ENCODE measurements at regions of chr10 and their contacts with region 1.

Region 1: GRCh38 chr10:73096449-73097304 is at the start of gene P4HA1:
- DNase-seq: peak; percentile 90 to 98 (median 94)
- ATAC-seq: peak; percentile 81 to 92 (median 90)
- H3K4me3 ChIP-seq: peak within 1 kb of the TSS; percentile 86 to 96
- H3K4me3 Mint-ChIP-seq: peak within 1 kb of the TSS; percentile 90 to 95 (median 95)
- H3K27ac ChIP-seq: peak within 1 kb of the TSS; percentile 97
- H3K27ac Mint-ChIP-seq: peak within 1 kb of the TSS; percentile 88 to 93
- H3K4me1 ChIP-seq: peaks cover 2 to 24% of the 10 kb centered on the region in 2 experiments
- H3K4me1 Mint-ChIP-seq: peaks cover 27 to 40% (median 31%) of the 10 kb centered on the region in 3 donors
- H3K27me3 ChIP-seq: no peaks in the 10 kb centered on the region
- H3K27me3 Mint-ChIP-seq: no peaks in the 10 kb centered on the region
- total RNA-seq, gene P4HA1: 11.3 to 15.4 (median 13.0) TPM

Region 2: GRCh38 chr10:71582019-71582418 is 1514.7 kb before region 1 on chr10:
- CTCF ChIA-PET with region 1: no interaction called
- POLR2A ChIA-PET with region 1: interaction called in 1 of 2 experiments, 16 read pairs
- DNase-seq: no peak
- ATAC-seq: no peak
- H3K4me3 ChIP-seq: no peak overlapping the region
- H3K4me3 Mint-ChIP-seq: no peak overlapping the region
- H3K27ac ChIP-seq: no peak overlapping the region
- H3K27ac Mint-ChIP-seq: no peak overlapping the region
- H3K4me1 ChIP-seq: no peaks in the 10 kb centered on the region
- H3K4me1 Mint-ChIP-seq: no peaks in the 10 kb centered on the region
- H3K27me3 ChIP-seq: peaks cover 0 to 28% of the 10 kb centered on the region in 2 experiments
- H3K27me3 Mint-ChIP-seq: peaks cover 0 to 4% of the 10 kb centered on the region in 2 donors

Region 3: GRCh38 chr10:72904806-72905205 is 191.9 kb before region 1 on chr10:
- CTCF ChIA-PET with region 1: no interaction called
- POLR2A ChIA-PET with region 1: no interaction called
- DNase-seq: no peak
- ATAC-seq: no peak
- H3K4me3 ChIP-seq: no peak overlapping the region
- H3K4me3 Mint-ChIP-seq: no peak overlapping the region
- H3K27ac ChIP-seq: no peak overlapping the region
- H3K27ac Mint-ChIP-seq: no peak overlapping the region
- H3K4me1 ChIP-seq: no peaks in the 10 kb centered on the region
- H3K4me1 Mint-ChIP-seq: no peaks in the 10 kb centered on the region
- H3K27me3 ChIP-seq: peaks cover 0 to 9% of the 10 kb centered on the region in 2 experiments
- H3K27me3 Mint-ChIP-seq: peaks cover 0 to 2% of the 10 kb centered on the region in 2 donors

Region 4: DNA sequence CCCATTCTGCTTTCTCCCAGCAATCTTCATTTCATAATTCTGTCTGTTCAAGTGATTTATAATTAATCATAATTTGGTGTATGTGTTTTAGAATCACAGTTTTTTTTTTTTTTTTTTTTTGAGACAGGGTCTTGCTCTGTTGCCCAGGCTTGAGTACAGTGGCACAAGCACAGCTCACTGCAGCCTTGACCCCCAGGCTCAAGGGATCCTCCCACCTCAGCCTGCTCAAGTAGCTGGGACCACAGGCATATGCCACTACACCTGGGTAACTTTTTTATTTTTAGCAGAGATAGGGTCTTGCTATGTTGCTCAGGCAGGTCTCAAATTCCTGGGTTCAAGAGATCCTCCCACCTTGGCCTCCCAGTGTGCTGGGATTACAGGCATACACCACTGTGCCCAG is 92.9 kb before region 1 on chr10:
- CTCF ChIA-PET with region 1: no interaction called
- POLR2A ChIA-PET with region 1: interaction called in 1 of 2 experiments, 11 read pairs
- DNase-seq: no peak
- ATAC-seq: no peak
- H3K4me3 ChIP-seq: no peak overlapping the region
- H3K4me3 Mint-ChIP-seq: no peak overlapping the region
- H3K27ac ChIP-seq: no peak overlapping the region
- H3K27ac Mint-ChIP-seq: no peak overlapping the region
- H3K4me1 ChIP-seq: no peaks in the 10 kb centered on the region
- H3K4me1 Mint-ChIP-seq: no peaks in the 10 kb centered on the region
- H3K27me3 ChIP-seq: no peaks in the 10 kb centered on the region
- H3K27me3 Mint-ChIP-seq: no peaks in the 10 kb centered on the region

Region 5: GRCh38 chr10:73054286-73054685 is 42.4 kb before region 1 on chr10:
- CTCF ChIA-PET with region 1: no interaction called
- POLR2A ChIA-PET with region 1: no interaction called
- DNase-seq: no peak
- ATAC-seq: no peak
- H3K4me3 ChIP-seq: no peak overlapping the region
- H3K4me3 Mint-ChIP-seq: no peak overlapping the region
- H3K27ac ChIP-seq: no peak overlapping the region
- H3K27ac Mint-ChIP-seq: no peak overlapping the region
- H3K4me1 ChIP-seq: no peaks in the 10 kb centered on the region
- H3K4me1 Mint-ChIP-seq: no peaks in the 10 kb centered on the region
- H3K27me3 ChIP-seq: no peaks in the 10 kb centered on the region
- H3K27me3 Mint-ChIP-seq: no peaks in the 10 kb centered on the region

Region 6: GRCh38 chr10:73110345-73110849 is 13.7 kb after region 1 on chr10 and contains the start of gene NUDT13:
- CTCF ChIA-PET with region 1: interaction called, 12 to 23 read pairs
- POLR2A ChIA-PET with region 1: interaction called in 1 of 2 experiments, 14 read pairs
- DNase-seq: peak in 33 of 35 experiments; percentile 8 to 75 (median 29)
- ATAC-seq: peak; percentile 86 to 95 (median 92)
- H3K4me3 ChIP-seq: peak within 1 kb of the TSS; percentile 51 to 64
- H3K4me3 Mint-ChIP-seq: peak within 1 kb of the TSS; percentile 88 to 90 (median 89)
- H3K27ac ChIP-seq: peak within 1 kb of the TSS; percentile 30
- H3K27ac Mint-ChIP-seq: peak within 1 kb of the TSS; percentile 90 to 95
- H3K4me1 ChIP-seq: peaks cover 4% of the 10 kb centered on the region in 2 experiments
- H3K4me1 Mint-ChIP-seq: peaks cover 10 to 16% (median 13%) of the 10 kb centered on the region in 3 donors
- H3K27me3 ChIP-seq: no peaks in the 10 kb centered on the region
- H3K27me3 Mint-ChIP-seq: no peaks in the 10 kb centered on the region
- total RNA-seq, gene NUDT13: 0.49 to 3.3 (median 2.2) TPM

Region 7: DNA sequence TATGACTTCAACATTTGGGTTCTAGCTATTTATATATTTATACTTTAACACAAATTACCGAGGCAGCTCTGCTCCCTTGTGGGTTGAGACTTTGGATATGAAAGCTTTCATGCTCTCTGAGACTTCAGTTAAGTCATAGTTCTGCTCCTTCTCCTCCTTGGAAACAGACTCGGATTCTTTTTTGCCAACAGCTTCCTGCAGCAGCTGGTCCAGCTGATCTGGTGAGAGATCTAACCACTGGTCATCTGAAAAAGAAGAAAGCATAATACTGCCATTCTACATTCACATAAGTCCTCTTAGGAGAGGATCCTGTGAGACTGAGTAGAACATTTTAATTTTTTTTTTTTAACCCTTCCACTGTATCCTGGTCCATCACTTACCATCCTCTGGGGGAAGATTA is 42.6 kb after region 1 on chr10:
- CTCF ChIA-PET with region 1: interaction called, 3 to 17 read pairs
- POLR2A ChIA-PET with region 1: interaction called, 3 read pairs
- DNase-seq: no peak
- ATAC-seq: no peak
- H3K4me3 ChIP-seq: no peak overlapping the region
- H3K4me3 Mint-ChIP-seq: no peak overlapping the region
- H3K27ac ChIP-seq: no peak overlapping the region
- H3K27ac Mint-ChIP-seq: no peak overlapping the region
- H3K4me1 ChIP-seq: no peaks in the 10 kb centered on the region
- H3K4me1 Mint-ChIP-seq: no peaks in the 10 kb centered on the region
- H3K27me3 ChIP-seq: no peaks in the 10 kb centered on the region
- H3K27me3 Mint-ChIP-seq: no peaks in the 10 kb centered on the region

Region 8: DNA sequence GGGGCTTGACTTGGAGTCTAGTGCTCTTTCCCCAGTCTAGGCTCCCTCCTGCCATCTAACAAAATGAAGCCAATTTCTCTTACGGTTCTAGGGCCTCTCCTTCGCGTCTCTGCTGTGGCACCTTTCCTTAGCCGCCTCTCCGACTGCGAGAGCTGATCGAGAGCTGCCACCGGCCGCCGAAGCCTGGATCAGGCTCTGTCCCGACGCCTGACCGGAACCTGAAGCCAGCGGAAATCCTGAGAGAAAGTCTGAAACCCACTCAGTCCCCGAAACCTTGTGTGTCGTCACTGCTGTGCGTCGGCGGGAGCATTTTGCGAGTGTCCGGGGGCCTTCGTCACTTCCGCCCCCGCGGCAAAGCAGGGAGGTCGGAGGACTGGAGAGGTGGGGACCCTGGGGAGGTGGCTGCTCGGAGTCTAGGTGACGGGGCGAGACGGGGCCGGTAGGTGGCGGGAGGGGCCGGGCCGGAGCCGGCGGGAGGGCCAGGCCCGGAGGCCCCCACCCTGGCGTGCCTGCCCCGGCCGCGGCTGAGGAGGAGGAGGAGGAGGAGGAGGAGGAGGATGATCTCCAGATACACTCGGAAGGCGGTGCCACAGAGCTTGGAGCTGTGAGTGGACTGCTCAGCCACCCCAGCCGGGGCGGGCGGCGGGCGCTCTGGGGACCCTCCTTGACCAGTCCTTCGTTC is 71.2 kb after region 1 on chr10 and contains the starts of genes ECD and FAM149B1:
- CTCF ChIA-PET with region 1: interaction called, 5 to 13 read pairs
- POLR2A ChIA-PET with region 1: interaction called, 3 to 14 read pairs
- DNase-seq: peak; percentile 79 to 95 (median 89)
- ATAC-seq: peak; percentile 95 to 96 (median 95)
- H3K4me3 ChIP-seq: peak within 1 kb of the TSS; percentile 87 to 98
- H3K4me3 Mint-ChIP-seq: peak within 1 kb of the TSS; percentile 97 to 100 (median 100)
- H3K27ac ChIP-seq: peak within 1 kb of the TSS; percentile 95
- H3K27ac Mint-ChIP-seq: peak within 1 kb of the TSS; percentile 97 to 99
- H3K4me1 ChIP-seq: peaks cover 19 to 26% of the 10 kb centered on the region in 2 experiments
- H3K4me1 Mint-ChIP-seq: peaks cover 42 to 51% (median 44%) of the 10 kb centered on the region in 3 donors
- H3K27me3 ChIP-seq: no peaks in the 10 kb centered on the region
- H3K27me3 Mint-ChIP-seq: no peaks in the 10 kb centered on the region
- total RNA-seq, gene ECD: 26.3 to 46.8 (median 31.2) TPM
- total RNA-seq, gene FAM149B1: 14.0 to 16.6 (median 15.8) TPM

Region 9: GRCh38 chr10:73232887-73233286 is 136.2 kb after region 1 on chr10:
- CTCF ChIA-PET with region 1: no interaction called
- POLR2A ChIA-PET with region 1: no interaction called
- DNase-seq: peak in 1 of 35 experiments; percentile 16
- ATAC-seq: no peak
- H3K4me3 ChIP-seq: no peak overlapping the region
- H3K4me3 Mint-ChIP-seq: no peak overlapping the region
- H3K27ac ChIP-seq: no peak overlapping the region
- H3K27ac Mint-ChIP-seq: no peak overlapping the region
- H3K4me1 ChIP-seq: no peaks in the 10 kb centered on the region
- H3K4me1 Mint-ChIP-seq: no peaks in the 10 kb centered on the region
- H3K27me3 ChIP-seq: no peaks in the 10 kb centered on the region
- H3K27me3 Mint-ChIP-seq: no peaks in the 10 kb centered on the region

Measured in T-cell (primary cell).